Breast epithelium (tissue), 4 donors: ENCODE measurements at regions of chr3 and their contacts with region 1.

Region 1: GRCh38 chr3:136518102-136518501 is 234.1 kb downstream of the STAG1 start:
- DNase-seq: no peak
- H3K4me3 ChIP-seq: no peak overlapping the region
- H3K27ac ChIP-seq: no peak overlapping the region
- H3K4me1 ChIP-seq: no peaks in the 10 kb centered on the region
- H3K27me3 ChIP-seq: no peaks in the 10 kb centered on the region
- CTCF ChIP-seq: no peak
- POLR2A ChIP-seq: no peak

Region 2: GRCh38 chr3:135844386-135844785 is 673.7 kb before region 1 on chr3:
- intact Hi-C with region 1: no loop called
- DNase-seq: no peak
- H3K4me3 ChIP-seq: no peak overlapping the region
- H3K27ac ChIP-seq: no peak overlapping the region
- H3K4me1 ChIP-seq: no peaks in the 10 kb centered on the region
- H3K27me3 ChIP-seq: no peaks in the 10 kb centered on the region
- CTCF ChIP-seq: no peak
- POLR2A ChIP-seq: no peak

Region 3: DNA sequence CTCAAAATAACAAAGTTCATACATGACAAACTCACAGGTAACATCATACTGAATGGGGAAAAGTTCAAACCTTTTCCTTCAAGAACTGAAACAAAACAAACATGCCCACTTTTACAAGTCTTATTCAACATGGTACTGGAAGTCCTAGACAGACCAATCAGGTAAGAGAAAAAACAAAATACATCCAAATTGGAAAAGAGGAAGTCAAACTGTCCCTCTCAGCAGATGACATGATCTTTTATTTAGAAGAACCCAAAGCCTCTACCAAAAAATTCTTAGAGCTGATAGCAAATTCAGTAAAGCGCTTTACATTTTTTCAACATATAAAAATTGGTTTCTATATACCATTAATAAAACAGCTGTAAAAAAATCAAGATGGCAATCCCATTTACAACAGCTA is 14.7 kb after region 1 on chr3:
- intact Hi-C with region 1: loop called (anchors 1 kb)
- DNase-seq: no peak
- H3K4me3 ChIP-seq: no peak overlapping the region
- H3K27ac ChIP-seq: no peak overlapping the region
- H3K4me1 ChIP-seq: no peaks in the 10 kb centered on the region
- H3K27me3 ChIP-seq: no peaks in the 10 kb centered on the region
- CTCF ChIP-seq: no peak
- POLR2A ChIP-seq: no peak

Region 4: GRCh38 chr3:136621628-136622027 is 103.5 kb after region 1 on chr3:
- intact Hi-C with region 1: no loop called
- DNase-seq: no peak
- H3K4me3 ChIP-seq: no peak overlapping the region
- H3K27ac ChIP-seq: no peak overlapping the region
- H3K4me1 ChIP-seq: no peaks in the 10 kb centered on the region
- H3K27me3 ChIP-seq: no peaks in the 10 kb centered on the region
- CTCF ChIP-seq: no peak
- POLR2A ChIP-seq: no peak

Region 5: DNA sequence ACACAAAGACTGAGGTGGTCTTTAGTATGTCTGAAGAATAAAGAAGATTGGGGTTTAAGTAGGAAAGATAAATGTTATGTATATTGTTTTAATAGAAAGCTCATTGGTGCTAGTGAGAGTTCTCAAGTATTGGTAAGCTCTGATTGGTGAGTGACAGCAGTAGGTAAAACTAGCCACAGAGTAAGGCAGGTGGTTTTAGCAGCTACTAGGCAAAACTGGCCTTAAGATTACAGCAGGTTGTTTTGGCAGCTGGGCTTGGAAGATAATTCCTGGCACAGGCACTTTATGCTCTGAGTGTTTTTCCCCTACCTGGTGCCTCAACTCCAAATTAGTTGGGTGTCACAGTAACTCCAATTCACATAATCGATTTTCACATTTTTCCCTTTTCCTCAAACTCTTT is 167.8 kb after region 1 on chr3:
- intact Hi-C with region 1: no loop called
- DNase-seq: no peak
- H3K4me3 ChIP-seq: no peak overlapping the region
- H3K27ac ChIP-seq: no peak overlapping the region
- H3K4me1 ChIP-seq: no peaks in the 10 kb centered on the region
- H3K27me3 ChIP-seq: no peaks in the 10 kb centered on the region
- CTCF ChIP-seq: no peak
- POLR2A ChIP-seq: no peak